Panc1 (cell line): ENCODE measurements at regions of chr1 and their contacts with region 1.

Region 1: DNA sequence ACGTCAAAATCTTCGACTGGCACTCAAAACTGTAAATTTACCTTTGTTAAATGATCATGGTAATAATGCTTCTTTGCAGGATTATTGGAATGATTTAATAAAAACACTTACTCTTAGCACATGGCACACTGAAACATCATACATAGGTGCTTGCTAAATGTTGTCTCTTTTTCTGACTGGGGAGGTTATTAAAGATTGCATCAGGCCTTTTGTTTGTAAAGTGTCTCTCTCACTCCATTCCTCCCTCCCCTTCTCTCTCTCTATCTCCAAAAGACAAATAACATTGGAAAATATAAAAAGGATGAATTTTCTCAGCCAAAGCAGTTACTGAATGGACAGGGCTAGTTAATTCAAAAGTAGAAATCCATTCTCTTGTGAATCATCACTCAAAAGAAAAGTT is 404.2 kb downstream of the DPYD start:
- DNase-seq: no peak
- ATAC-seq: no peak
- H3K4me3 ChIP-seq: no peak overlapping the region
- H3K27ac ChIP-seq: no peak overlapping the region
- H3K4me1 ChIP-seq: no peaks in the 10 kb centered on the region
- H3K27me3 ChIP-seq: no peaks in the 10 kb centered on the region
- CTCF ChIP-seq: no peak

Region 2: DNA sequence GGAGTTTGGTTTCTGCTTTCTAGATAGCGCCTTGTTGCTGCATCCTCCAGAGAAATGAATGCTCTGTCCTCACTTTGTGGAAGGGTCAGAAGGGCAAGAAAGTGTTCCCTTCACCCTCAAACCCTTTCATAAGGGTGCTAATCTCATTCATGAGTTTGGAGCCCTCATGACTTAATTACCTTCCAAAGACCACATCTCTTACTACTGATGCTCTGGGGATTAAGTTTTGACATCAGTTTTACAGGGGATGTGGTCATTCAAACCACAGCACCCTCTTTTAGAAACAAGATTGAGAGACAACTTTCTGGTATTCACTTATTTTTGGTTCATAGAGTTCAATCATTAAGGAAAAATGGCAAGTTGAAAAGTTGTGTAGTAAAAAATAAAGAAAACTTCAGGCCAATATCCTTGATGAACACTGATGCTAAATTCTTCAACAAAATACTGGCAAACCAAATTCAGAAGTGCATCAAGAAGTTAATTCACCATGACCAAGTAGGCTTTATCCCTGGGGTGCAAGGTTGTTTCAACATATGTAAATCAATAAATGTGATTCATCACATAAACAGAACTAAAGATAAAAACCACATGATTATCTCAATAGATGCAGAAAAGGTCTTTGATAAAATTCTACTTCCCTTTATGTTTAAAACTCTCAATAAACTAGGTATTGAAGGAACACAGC is 352.9 kb before region 1 on chr1:
- CTCF ChIA-PET with region 1: no interaction called
- POLR2A ChIA-PET with region 1: no interaction called
- in situ Hi-C with region 1: no loop called
- intact Hi-C with region 1: no loop called
- DNase-seq: no peak
- ATAC-seq: no peak
- H3K4me3 ChIP-seq: no peak overlapping the region
- H3K27ac ChIP-seq: no peak overlapping the region
- H3K4me1 ChIP-seq: no peaks in the 10 kb centered on the region
- H3K27me3 ChIP-seq: no peaks in the 10 kb centered on the region
- CTCF ChIP-seq: no peak

Region 3: DNA sequence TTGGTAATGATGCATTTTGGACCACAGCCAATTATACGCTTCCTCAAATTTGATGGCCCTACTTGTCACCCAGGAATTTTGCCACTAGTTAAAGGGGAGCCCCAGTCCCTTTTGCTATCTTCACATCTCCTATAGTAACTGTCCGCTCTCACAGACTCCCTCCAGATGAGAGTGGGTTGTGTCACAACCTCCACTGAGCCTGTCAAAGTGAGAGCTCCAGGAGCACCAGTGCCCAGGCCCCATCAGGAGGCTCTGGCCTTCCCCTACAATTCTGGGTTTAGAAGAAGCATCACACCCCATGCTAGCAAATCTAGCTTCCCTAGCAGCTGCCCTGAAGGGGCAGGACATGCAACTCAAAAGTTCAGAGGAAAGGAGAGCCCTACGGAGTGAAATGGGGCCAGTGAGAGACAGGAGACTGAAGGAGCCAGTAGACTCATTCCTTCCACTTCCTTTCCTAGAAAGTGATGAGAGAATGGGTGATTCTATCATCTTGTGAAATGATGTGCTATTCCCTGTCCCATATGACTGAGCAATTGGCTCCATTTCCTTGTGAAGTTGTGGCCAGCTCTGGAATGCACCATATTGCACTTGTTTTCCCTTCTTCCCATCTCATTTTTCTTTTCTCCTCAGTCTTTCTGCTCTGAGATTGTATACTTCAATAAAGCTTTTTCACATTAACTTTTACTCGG is 137.1 kb before region 1 on chr1:
- CTCF ChIA-PET with region 1: interaction called, 19 read pairs
- POLR2A ChIA-PET with region 1: no interaction called
- in situ Hi-C with region 1: no loop called
- intact Hi-C with region 1: no loop called
- DNase-seq: no peak
- ATAC-seq: no peak
- H3K4me3 ChIP-seq: no peak overlapping the region
- H3K27ac ChIP-seq: no peak overlapping the region
- H3K4me1 ChIP-seq: no peaks in the 10 kb centered on the region
- H3K27me3 ChIP-seq: no peaks in the 10 kb centered on the region
- CTCF ChIP-seq: no peak